ENCODE measurements at regions of chr9 and their contacts with region 1.

Region 1: GRCh38 chr9:124040935-124041816 is 29.6 kb downstream of the LHX2 start:
- DNase-seq: peak; percentile 16
- H3K4me3 ChIP-seq: no peak overlapping the region
- H3K27ac ChIP-seq: no peak overlapping the region
- H3K4me1 ChIP-seq: no peaks in the 10 kb centered on the region
- CTCF ChIP-seq: peak; percentile 89

Region 2: DNA sequence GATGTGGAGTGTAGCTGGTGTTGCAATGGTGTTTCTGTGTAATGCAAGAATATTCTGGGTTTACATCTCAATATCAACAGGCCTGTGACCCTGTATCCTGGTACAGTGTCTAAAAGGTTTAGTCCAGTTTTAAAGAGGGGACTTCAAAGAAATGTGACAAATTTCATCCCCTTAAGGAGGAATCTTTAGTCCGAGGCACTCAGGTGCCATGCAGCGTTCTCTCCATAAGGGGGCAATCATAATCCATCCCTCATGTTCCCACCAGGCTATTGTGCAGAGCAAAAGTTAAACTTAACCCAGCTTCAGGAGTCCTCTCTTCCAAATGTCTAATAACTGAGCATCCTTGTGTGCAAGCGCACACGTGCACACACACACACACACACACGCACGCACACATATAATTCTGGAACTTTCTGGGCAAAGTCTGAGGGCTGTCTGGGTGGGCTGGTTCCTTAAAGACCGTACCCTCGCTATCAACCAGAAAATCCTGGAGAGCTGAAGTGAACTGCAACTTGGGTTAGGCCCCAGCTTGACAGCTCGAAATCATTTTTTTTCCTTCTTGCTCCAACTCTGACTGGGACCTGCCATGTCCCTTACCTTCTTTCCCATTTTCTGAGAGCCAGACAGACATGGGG is 639.2 kb before region 1 on chr9:
- CTCF ChIA-PET with region 1: interaction called, 4 read pairs
- POLR2A ChIA-PET with region 1: no interaction called
- intact Hi-C with region 1: loop called (anchors 5 kb)
- DNase-seq: peak; percentile 55
- H3K4me3 ChIP-seq: no peak overlapping the region
- H3K27ac ChIP-seq: no peak overlapping the region
- H3K4me1 ChIP-seq: no peaks in the 10 kb centered on the region
- CTCF ChIP-seq: peak; percentile 86

Region 3: GRCh38 chr9:123544007-123544827 is 497.0 kb before region 1 on chr9:
- CTCF ChIA-PET with region 1: interaction called, 5 read pairs
- POLR2A ChIA-PET with region 1: no interaction called
- intact Hi-C with region 1: loop called (anchors 1 kb)
- DNase-seq: peak; percentile 55
- H3K4me3 ChIP-seq: no peak overlapping the region
- H3K27ac ChIP-seq: no peak overlapping the region
- H3K4me1 ChIP-seq: no peaks in the 10 kb centered on the region
- CTCF ChIP-seq: peak; percentile 100

Region 4: GRCh38 chr9:123964761-123965160 is 76.4 kb before region 1 on chr9:
- CTCF ChIA-PET with region 1: no interaction called
- POLR2A ChIA-PET with region 1: no interaction called
- intact Hi-C with region 1: no loop called
- DNase-seq: no peak
- H3K4me3 ChIP-seq: no peak overlapping the region
- H3K27ac ChIP-seq: no peak overlapping the region
- H3K4me1 ChIP-seq: no peaks in the 10 kb centered on the region
- CTCF ChIP-seq: no peak

Measured in OCI-LY7 (cell line).